ENCODE measurements at regions of chrX and their contacts with region 1.

Region 1: DNA sequence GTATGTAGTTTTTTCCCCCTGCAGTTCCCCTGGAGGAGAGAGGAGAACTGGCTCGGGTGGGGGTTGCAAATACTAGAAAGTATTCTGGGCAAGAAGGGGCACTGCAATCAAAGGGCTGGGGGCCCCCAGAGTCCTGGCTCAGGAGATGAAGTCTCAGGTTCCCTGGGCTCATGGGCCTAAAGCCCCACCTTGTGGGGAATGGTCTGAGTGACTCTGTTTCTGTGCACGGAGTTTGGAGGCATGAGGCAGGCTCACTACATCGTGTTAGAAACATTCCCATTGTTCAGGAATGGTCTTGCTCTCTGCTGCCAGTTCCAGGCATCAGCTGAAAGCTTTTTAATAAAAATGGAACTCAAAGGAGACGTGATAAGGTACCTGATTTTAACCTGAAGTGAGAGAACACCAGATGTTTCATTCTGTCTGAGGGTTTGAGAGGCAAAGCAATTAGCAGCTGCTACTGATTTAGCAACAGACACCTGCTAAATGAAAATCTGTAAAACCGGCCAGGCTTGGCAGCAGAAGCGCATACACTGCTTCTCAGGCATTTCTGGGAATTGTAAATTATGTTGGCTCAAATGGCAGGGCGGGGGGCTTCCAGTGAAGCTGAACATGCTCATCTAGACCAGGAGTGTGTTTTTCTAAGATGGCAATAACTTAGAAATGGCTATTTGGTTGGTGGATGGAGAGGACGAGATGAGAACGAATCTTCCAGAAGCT is 122.7 kb downstream of the TMEM164 start:
- DNase-seq: peak; percentile 6
- ATAC-seq: peak; percentile 84
- H3K4me3 ChIP-seq: no peak overlapping the region
- H3K27ac ChIP-seq: no peak overlapping the region
- H3K4me1 ChIP-seq: peaks cover 21% of the 10 kb centered on the region
- H3K27me3 ChIP-seq: no peaks in the 10 kb centered on the region
- CTCF ChIP-seq: peak; percentile 68
- EP300 ChIP-seq: no peak
- POLR2A ChIP-seq: no peak
- RAD21 ChIP-seq: peak; percentile 41; the same call in 1 of the 2 replicates

Region 2: GRCh38 chrX:109911046-109911445 is 214.6 kb before region 1 on chrX:
- CTCF ChIA-PET with region 1: no interaction called
- POLR2A ChIA-PET with region 1: no interaction called
- in situ Hi-C with region 1: no loop called
- intact Hi-C with region 1: loop called (anchors 2 kb)
- DNase-seq: no peak
- ATAC-seq: no peak
- H3K4me3 ChIP-seq: no peak overlapping the region
- H3K27ac ChIP-seq: no peak overlapping the region
- H3K4me1 ChIP-seq: peaks cover 13% of the 10 kb centered on the region
- H3K27me3 ChIP-seq: no peaks in the 10 kb centered on the region
- CTCF ChIP-seq: peak; percentile 34
- EP300 ChIP-seq: no peak
- POLR2A ChIP-seq: no peak
- RAD21 ChIP-seq: no peak

Region 3: DNA sequence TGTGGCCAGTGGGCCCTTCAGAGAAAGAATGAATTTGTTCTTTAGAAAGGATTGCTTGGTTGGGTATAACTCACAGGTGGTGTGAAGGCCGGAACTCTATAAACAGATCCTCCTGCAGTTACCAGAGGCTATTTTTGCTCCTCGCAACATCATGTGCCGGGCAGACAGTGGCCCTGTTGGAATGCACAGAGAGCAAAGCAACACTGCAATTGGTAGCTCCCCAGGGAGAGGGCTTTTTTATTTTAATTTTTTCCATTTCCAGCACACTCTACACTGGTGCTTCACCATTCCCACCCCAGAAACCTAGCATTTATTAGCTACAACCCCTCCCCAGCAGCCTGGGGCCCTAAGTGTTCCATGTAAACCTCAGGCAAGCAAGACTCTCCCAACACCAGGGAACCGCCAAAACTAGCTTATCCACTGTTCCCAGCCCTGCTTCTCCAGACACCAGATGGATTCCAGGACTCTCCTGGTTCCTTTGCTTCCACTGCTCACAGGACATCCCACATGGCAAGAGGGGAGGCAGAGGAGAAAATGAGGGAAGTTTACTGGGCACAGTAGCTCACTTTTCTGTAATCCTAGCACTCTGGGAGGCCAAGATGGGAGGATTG is 197.8 kb before region 1 on chrX:
- CTCF ChIA-PET with region 1: no interaction called
- POLR2A ChIA-PET with region 1: no interaction called
- in situ Hi-C with region 1: loop called (anchors 10 kb)
- intact Hi-C with region 1: no loop called
- DNase-seq: no peak
- ATAC-seq: no peak
- H3K4me3 ChIP-seq: no peak overlapping the region
- H3K27ac ChIP-seq: no peak overlapping the region
- H3K4me1 ChIP-seq: no peaks in the 10 kb centered on the region
- H3K27me3 ChIP-seq: no peaks in the 10 kb centered on the region
- CTCF ChIP-seq: no peak
- EP300 ChIP-seq: no peak
- POLR2A ChIP-seq: no peak
- RAD21 ChIP-seq: no peak

Region 4: DNA sequence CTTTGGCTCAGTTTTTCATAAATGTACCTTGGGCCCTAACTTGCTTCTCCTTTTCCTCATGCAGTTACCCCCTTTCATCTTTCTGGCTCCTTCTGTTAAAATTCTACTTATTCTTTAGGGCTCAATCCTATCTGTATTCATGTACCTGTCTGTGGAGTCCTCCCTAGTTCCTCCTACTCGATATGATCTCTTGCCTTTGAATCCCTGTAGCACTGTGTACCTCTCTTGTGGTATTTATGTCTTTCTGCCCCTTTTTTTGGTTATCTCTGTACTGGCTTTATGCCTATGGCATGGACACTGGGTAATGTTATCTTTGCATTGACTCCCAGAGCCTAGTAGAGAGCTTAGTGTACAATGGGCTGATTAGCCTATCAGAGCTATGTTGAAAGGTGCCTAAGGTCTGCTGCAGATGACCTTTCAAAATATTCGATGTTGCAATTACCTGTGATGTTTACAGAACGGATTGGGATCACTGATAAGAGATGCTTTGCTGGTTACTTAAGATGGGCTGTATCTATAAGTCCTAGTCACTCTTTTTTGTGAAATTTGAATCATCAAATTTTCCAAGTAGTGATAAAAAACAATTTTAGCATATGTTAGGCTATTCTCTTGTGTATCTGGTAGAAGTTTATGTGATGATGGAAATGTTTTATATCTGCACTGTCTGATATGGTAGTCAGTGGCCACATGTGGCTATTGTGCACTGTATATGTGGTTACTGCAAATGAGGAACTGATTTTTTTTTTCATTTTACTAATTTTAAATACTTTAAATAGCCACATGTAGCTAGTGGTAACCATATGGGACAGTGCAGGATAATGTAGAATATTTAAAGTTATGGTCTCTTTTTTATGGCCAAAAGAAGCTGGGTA is 89.2 kb before region 1 on chrX:
- CTCF ChIA-PET with region 1: no interaction called
- POLR2A ChIA-PET with region 1: no interaction called
- in situ Hi-C with region 1: no loop called
- intact Hi-C with region 1: loop called (anchors 1 kb)
- DNase-seq: peak; percentile 71
- ATAC-seq: peak; percentile 92
- H3K4me3 ChIP-seq: no peak overlapping the region
- H3K27ac ChIP-seq: no peak overlapping the region
- H3K4me1 ChIP-seq: peaks cover 33% of the 10 kb centered on the region
- H3K27me3 ChIP-seq: no peaks in the 10 kb centered on the region
- CTCF ChIP-seq: no peak
- EP300 ChIP-seq: peak in 1 of 2 experiments; percentile 69; a peak in 2 of 4 replicates
- POLR2A ChIP-seq: no peak
- RAD21 ChIP-seq: no peak

Region 5: DNA sequence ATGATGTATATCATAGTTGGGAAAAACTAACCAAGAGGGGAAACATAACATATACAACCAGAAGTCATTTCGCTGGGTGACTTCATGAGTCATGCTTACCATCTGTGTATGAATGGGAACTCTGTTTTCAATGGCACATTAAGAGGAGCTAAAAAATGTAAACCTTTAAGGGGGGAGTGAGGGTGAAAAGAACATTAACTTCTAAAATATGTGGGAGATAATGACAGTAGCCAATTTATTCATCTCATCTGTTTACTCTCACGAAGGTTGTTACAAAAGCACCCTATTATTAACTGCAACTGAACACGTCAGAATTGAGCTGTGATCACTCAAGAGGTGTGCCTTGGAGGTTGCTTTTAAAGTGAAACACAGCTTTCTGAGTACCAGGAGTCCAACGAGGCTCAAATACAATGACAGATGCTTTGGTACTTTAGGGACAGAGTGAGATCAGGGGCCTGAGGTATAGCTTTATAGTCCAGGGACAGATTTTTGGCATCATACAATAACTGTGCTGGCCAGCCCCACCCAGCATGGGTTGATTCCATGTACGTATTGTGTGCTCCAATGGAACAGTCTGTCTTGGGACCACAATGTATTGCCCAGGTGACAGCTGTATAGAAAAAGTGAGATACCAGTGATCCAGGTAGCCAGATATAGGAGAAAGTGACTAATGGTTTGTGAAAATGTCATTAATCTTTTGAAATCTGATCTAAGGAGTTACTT is 85.0 kb after region 1 on chrX:
- CTCF ChIA-PET with region 1: no interaction called
- POLR2A ChIA-PET with region 1: no interaction called
- in situ Hi-C with region 1: no loop called
- intact Hi-C with region 1: no loop called
- DNase-seq: peak; percentile 10
- ATAC-seq: no peak
- H3K4me3 ChIP-seq: no peak overlapping the region
- H3K27ac ChIP-seq: no peak overlapping the region
- H3K4me1 ChIP-seq: no peaks in the 10 kb centered on the region
- H3K27me3 ChIP-seq: no peaks in the 10 kb centered on the region
- CTCF ChIP-seq: no peak
- EP300 ChIP-seq: no peak
- POLR2A ChIP-seq: no peak
- RAD21 ChIP-seq: no peak